Panc1 (cell line): ENCODE measurements at regions of chr10 and their contacts with region 1.

Region 1: GRCh38 chr10:93746844-93747284 is 10.9 kb upstream of the LGI1 start:
- DNase-seq: peak; percentile 92
- ATAC-seq: peak; percentile 91
- H3K4me3 ChIP-seq: no peak overlapping the region
- H3K27ac ChIP-seq: no peak overlapping the region
- H3K4me1 ChIP-seq: peaks cover 17% of the 10 kb centered on the region
- H3K27me3 ChIP-seq: no peaks in the 10 kb centered on the region
- CTCF ChIP-seq: peak; percentile 77

Region 2: GRCh38 chr10:92699518-92700381 is 1047.1 kb before region 1 on chr10:
- CTCF ChIA-PET with region 1: no interaction called
- POLR2A ChIA-PET with region 1: no interaction called
- in situ Hi-C with region 1: no loop called
- intact Hi-C with region 1: no loop called
- DNase-seq: no peak
- ATAC-seq: peak; percentile 75
- H3K4me3 ChIP-seq: peak overlapping the region; percentile 34 to 65
- H3K27ac ChIP-seq: peak overlapping the region; percentile 63
- H3K4me1 ChIP-seq: peaks cover 10% of the 10 kb centered on the region
- H3K27me3 ChIP-seq: no peaks in the 10 kb centered on the region
- CTCF ChIP-seq: no peak

Region 3: GRCh38 chr10:94524146-94524545 is 777.3 kb after region 1 on chr10:
- CTCF ChIA-PET with region 1: interaction called, 10 read pairs
- POLR2A ChIA-PET with region 1: no interaction called
- in situ Hi-C with region 1: no loop called
- intact Hi-C with region 1: no loop called
- DNase-seq: no peak
- ATAC-seq: no peak
- H3K4me3 ChIP-seq: no peak overlapping the region
- H3K27ac ChIP-seq: no peak overlapping the region
- H3K4me1 ChIP-seq: no peaks in the 10 kb centered on the region
- H3K27me3 ChIP-seq: no peaks in the 10 kb centered on the region
- CTCF ChIP-seq: no peak